WTC11 (cell line): ENCODE measurements at regions of chr1 and their contacts with region 1.

Region 1: GRCh38 chr1:31182352-31182751 is 57.3 kb downstream of the NKAIN1 start:
- DNase-seq: peak; percentile 90
- ATAC-seq: peak; percentile 70
- H3K4me3 Mint-ChIP-seq: peak overlapping the region; percentile 69
- H3K27ac Mint-ChIP-seq: no peak overlapping the region
- H3K4me1 Mint-ChIP-seq: 0 out of 2 replicates have a peak, but pooled peaks cover 2% of the 10 kb centered on the region
- H3K27me3 Mint-ChIP-seq: 0 out of 2 replicates have a peak, but pooled peaks cover 4% of the 10 kb centered on the region
- CTCF ChIP-seq: no peak

Region 2: DNA sequence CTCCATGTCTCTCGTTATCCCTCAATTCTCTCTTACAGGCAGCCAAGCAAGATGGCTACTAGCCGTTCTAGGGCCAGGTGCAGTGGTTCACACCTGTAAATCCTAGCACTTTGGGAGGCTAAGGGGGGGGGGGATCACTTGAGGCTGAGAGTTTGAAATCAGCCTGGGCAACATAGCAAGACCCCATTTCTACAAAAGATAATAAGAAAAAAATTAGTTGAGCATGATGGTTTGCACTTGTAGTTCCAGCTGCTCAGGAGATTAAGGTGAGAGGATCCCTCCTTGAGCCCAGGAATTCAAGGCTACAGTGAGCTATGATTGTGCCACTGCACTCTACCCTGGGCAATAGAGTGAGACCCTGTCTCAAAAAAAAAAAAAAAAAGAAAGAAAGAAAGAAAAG is 23.0 kb before region 1 on chr1:
- CTCF ChIA-PET with region 1: interaction called, 30 read pairs
- POLR2A ChIA-PET with region 1: no interaction called
- DNase-seq: no peak
- ATAC-seq: no peak
- H3K4me3 Mint-ChIP-seq: no peak overlapping the region
- H3K27ac Mint-ChIP-seq: no peak overlapping the region
- H3K4me1 Mint-ChIP-seq: peaks cover 16% of the 10 kb centered on the region
- H3K27me3 Mint-ChIP-seq: no peaks in the 10 kb centered on the region
- CTCF ChIP-seq: no peak

Region 3: GRCh38 chr1:31216016-31216415 is 33.7 kb after region 1 on chr1:
- CTCF ChIA-PET with region 1: interaction called, 59 read pairs
- POLR2A ChIA-PET with region 1: no interaction called
- DNase-seq: peak; percentile 44
- ATAC-seq: peak; percentile 55
- H3K4me3 Mint-ChIP-seq: no peak overlapping the region
- H3K27ac Mint-ChIP-seq: peak overlapping the region; percentile 59; the same call in 1 of the 2 replicates
- H3K4me1 Mint-ChIP-seq: peaks cover 24% of the 10 kb centered on the region
- H3K27me3 Mint-ChIP-seq: no peaks in the 10 kb centered on the region
- CTCF ChIP-seq: no peak

Region 4: DNA sequence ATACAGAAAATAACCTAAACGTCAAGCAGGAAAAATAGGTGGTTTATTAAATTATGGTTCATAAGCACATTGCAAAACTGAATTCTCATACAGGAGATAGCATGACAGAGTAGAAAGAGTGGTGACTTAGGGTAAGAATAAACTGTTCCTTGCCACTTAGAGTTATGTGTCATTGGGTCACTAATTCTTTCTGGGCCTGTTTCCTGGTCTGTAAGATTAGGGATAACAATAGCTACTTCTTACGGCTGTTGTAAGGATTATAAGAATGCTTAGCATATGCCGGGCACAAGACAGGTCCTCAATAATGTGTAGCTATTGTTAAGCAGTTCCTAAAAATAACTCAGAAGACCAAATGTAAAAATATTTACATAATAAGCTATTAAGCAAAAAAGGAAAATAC is 90.0 kb after region 1 on chr1:
- CTCF ChIA-PET with region 1: interaction called, 32 read pairs
- POLR2A ChIA-PET with region 1: no interaction called
- DNase-seq: no peak
- ATAC-seq: no peak
- H3K4me3 Mint-ChIP-seq: no peak overlapping the region
- H3K27ac Mint-ChIP-seq: no peak overlapping the region
- H3K4me1 Mint-ChIP-seq: no peaks in the 10 kb centered on the region
- H3K27me3 Mint-ChIP-seq: no peaks in the 10 kb centered on the region
- CTCF ChIP-seq: no peak

Region 5: GRCh38 chr1:31335007-31335406 is 152.7 kb after region 1 on chr1:
- CTCF ChIA-PET with region 1: interaction called, 11 read pairs
- POLR2A ChIA-PET with region 1: no interaction called
- DNase-seq: no peak
- ATAC-seq: peak; percentile 60
- H3K4me3 Mint-ChIP-seq: no peak overlapping the region
- H3K27ac Mint-ChIP-seq: no peak overlapping the region
- H3K4me1 Mint-ChIP-seq: no peaks in the 10 kb centered on the region
- H3K27me3 Mint-ChIP-seq: no peaks in the 10 kb centered on the region
- CTCF ChIP-seq: no peak

Region 6: DNA sequence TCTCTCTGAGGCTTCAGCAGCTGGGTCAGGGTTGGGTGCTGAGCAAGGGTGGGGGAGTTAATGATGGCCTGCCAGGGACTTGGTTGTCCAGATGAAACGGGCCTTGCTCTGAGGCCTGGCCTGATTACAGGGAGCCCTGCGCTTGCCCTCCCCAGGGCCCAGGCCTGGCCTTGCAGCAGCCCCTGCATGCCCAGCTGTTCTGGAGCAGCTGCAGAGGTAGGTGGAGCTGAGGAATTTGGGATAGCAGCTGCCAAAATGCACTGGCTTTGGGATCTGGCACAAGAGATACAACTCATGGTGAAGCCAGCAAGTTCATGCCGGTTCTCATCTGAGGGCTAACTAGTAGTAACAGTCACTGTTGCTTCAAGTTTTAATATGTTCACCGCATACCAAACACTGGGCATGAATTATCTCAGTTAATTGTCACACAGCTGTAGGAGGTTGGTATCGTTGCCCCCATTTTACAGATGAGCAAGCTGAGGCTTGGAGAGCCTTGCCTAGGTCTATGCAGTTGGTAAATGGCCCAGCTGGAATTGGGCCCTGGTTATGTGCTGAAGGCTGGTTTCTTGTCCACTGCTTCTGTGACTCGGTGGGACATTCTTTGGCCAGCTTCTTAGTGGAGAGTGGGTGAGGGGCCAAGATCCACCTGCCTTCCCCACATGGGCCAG is 223.4 kb after region 1 on chr1:
- CTCF ChIA-PET with region 1: no interaction called
- POLR2A ChIA-PET with region 1: no interaction called
- DNase-seq: no peak
- ATAC-seq: no peak
- H3K4me3 Mint-ChIP-seq: no peak overlapping the region
- H3K27ac Mint-ChIP-seq: no peak overlapping the region
- H3K4me1 Mint-ChIP-seq: no peaks in the 10 kb centered on the region
- H3K27me3 Mint-ChIP-seq: no peaks in the 10 kb centered on the region; the same call in 1 of the 2 replicates
- CTCF ChIP-seq: no peak

Region 7: GRCh38 chr1:31422505-31423319 is 240.4 kb after region 1 on chr1:
- CTCF ChIA-PET with region 1: interaction called, 18 read pairs
- POLR2A ChIA-PET with region 1: no interaction called
- DNase-seq: peak; percentile 83
- ATAC-seq: peak; percentile 74
- H3K4me3 Mint-ChIP-seq: no peak overlapping the region
- H3K27ac Mint-ChIP-seq: no peak overlapping the region
- H3K4me1 Mint-ChIP-seq: peaks cover 12% of the 10 kb centered on the region; the same call in 1 of the 2 replicates
- H3K27me3 Mint-ChIP-seq: no peaks in the 10 kb centered on the region
- CTCF ChIP-seq: peak; percentile 83

Region 8: GRCh38 chr1:31460027-31460426 is 277.7 kb after region 1 on chr1:
- CTCF ChIA-PET with region 1: no interaction called
- POLR2A ChIA-PET with region 1: no interaction called
- DNase-seq: no peak
- ATAC-seq: peak; percentile 63
- H3K4me3 Mint-ChIP-seq: no peak overlapping the region
- H3K27ac Mint-ChIP-seq: no peak overlapping the region
- H3K4me1 Mint-ChIP-seq: peaks cover 9% of the 10 kb centered on the region
- H3K27me3 Mint-ChIP-seq: peaks cover 17% of the 10 kb centered on the region
- CTCF ChIP-seq: no peak